SK-N-SH (cell line): ENCODE measurements at regions of chr1 and their contacts with region 1.

Region 1: DNA sequence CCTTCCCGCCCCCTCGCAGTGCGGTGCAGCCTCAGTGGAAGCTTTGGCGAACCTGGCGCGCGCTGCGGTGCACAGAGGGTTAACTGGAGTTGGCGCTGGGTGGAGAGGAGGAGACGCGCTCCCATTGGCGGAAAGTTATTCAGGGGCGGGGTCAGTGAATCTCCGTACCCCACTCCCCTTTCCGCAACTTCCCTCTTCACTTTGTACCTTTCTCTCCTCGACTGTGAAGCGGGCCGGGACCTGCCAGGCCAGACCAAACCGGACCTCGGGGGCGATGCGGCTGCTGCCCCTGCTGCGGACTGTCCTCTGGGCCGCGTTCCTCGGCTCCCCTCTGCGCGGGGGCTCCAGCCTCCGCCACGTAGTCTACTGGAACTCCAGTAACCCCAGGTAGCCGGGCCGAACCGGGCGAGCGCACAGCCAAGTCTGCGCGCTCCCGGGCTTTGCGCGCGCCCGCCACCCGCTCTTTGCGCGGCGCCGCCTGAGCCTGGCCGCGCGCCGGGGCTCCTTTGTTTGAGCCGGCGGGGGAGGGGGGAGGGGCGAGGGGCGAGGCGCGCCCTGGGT is at the start of gene EFNA4:
- DNase-seq: peak; percentile 95
- H3K4me3 ChIP-seq: peak within 1 kb of the TSS; percentile 79 to 92
- H3K27ac ChIP-seq: peak within 1 kb of the TSS; percentile 83 to 85
- H3K4me1 ChIP-seq: peaks cover 0 to 25% of the 10 kb centered on the region in 2 experiments; a peak in 2 of 4 replicates
- H3K27me3 ChIP-seq: no peaks in the 10 kb centered on the region
- CTCF ChIP-seq: no peak
- EP300 ChIP-seq: no peak
- RAD21 ChIP-seq: no peak
- polyA plus RNA-seq, gene EFNA4: 15.9 and 17.7 TPM in 2 replicates

Region 2: GRCh38 chr1:154819628-154820590 is 243.7 kb before region 1 on chr1:
- CTCF ChIA-PET with region 1: no interaction called
- POLR2A ChIA-PET with region 1: no interaction called
- DNase-seq: peak; percentile 57
- H3K4me3 ChIP-seq: no peak overlapping the region; a peak in 1 of 4 replicates
- H3K27ac ChIP-seq: no peak overlapping the region
- H3K4me1 ChIP-seq: peaks cover 0 to 26% of the 10 kb centered on the region in 2 experiments; a peak in 1 of 4 replicates
- H3K27me3 ChIP-seq: no peaks in the 10 kb centered on the region
- CTCF ChIP-seq: peak; percentile 47
- EP300 ChIP-seq: no peak
- RAD21 ChIP-seq: peak; percentile 35

Region 3: GRCh38 chr1:154955718-154956543 is 107.7 kb before region 1 on chr1 and contains the start of gene PBXIP1:
- CTCF ChIA-PET with region 1: interaction called, 13 read pairs
- POLR2A ChIA-PET with region 1: no interaction called
- DNase-seq: peak; percentile 94
- H3K4me3 ChIP-seq: peak within 1 kb of the TSS; percentile 74 to 79
- H3K27ac ChIP-seq: peak within 1 kb of the TSS; percentile 90 to 91
- H3K4me1 ChIP-seq: peaks cover 0 to 51% of the 10 kb centered on the region in 2 experiments; a peak in 3 of 4 replicates
- H3K27me3 ChIP-seq: no peaks in the 10 kb centered on the region
- CTCF ChIP-seq: peak; percentile 53
- EP300 ChIP-seq: no peak
- RAD21 ChIP-seq: peak; percentile 55
- polyA plus RNA-seq, gene PBXIP1: 55.9 and 64.3 TPM in 2 replicates

Region 4: DNA sequence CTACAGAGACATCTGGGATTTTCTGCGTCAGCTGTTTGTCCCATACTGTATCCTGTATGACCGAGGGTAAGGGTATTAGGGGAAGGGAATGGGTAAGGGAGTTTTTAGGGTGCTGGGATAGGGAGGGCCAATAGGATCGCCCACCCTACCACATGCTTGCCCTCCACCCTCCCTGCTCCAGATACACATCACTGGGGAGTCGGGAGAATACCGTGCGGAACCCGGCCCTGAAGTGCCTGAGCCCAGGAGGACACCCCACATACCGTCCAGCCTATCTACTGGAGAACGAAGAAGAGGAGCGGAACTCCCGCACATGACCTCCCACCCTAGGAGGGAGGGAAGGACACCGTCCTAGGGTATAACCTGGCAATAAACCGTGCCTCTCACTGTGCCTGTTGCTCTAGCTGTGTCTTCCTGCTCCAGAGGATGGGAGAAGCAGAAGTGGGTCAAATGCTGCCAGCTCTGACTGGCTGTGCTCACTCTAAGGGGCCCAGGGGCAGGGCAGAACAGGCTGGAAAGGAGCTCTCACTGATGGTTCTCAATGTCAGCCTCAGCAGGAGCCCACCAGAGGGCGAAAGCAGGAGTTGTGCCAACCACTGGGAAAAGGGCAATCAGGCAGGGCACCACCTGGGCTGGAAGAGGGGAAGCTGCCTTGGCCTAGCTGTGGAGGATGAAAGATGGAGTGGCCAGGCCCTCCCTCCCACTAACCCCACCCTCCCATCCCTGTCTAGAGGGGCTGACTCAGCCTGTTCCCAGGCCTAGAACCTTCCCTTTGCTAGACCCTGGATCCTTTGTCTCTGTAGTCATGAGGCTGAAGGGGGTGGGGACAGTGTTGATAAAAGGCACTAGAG is 70.7 kb before region 1 on chr1:
- CTCF ChIA-PET with region 1: interaction called, 11 read pairs
- POLR2A ChIA-PET with region 1: no interaction called
- DNase-seq: no peak
- H3K4me3 ChIP-seq: no peak overlapping the region
- H3K27ac ChIP-seq: peak overlapping the region; percentile 14 to 43; a peak in 2 of 4 replicates
- H3K4me1 ChIP-seq: peaks cover 3 to 29% of the 10 kb centered on the region in 2 experiments; a peak in 3 of 4 replicates
- H3K27me3 ChIP-seq: no peaks in the 10 kb centered on the region
- CTCF ChIP-seq: peak; percentile 30
- EP300 ChIP-seq: no peak
- RAD21 ChIP-seq: peak; percentile 31

Region 5: GRCh38 chr1:155022927-155023236 is 40.7 kb before region 1 on chr1:
- CTCF ChIA-PET with region 1: interaction called, 17 read pairs
- POLR2A ChIA-PET with region 1: no interaction called
- DNase-seq: peak; percentile 57
- H3K4me3 ChIP-seq: no peak overlapping the region
- H3K27ac ChIP-seq: no peak overlapping the region
- H3K4me1 ChIP-seq: peaks cover 0 to 4% of the 10 kb centered on the region in 2 experiments; a peak in 1 of 4 replicates
- H3K27me3 ChIP-seq: no peaks in the 10 kb centered on the region
- CTCF ChIP-seq: no peak
- EP300 ChIP-seq: no peak
- RAD21 ChIP-seq: no peak

Region 6: DNA sequence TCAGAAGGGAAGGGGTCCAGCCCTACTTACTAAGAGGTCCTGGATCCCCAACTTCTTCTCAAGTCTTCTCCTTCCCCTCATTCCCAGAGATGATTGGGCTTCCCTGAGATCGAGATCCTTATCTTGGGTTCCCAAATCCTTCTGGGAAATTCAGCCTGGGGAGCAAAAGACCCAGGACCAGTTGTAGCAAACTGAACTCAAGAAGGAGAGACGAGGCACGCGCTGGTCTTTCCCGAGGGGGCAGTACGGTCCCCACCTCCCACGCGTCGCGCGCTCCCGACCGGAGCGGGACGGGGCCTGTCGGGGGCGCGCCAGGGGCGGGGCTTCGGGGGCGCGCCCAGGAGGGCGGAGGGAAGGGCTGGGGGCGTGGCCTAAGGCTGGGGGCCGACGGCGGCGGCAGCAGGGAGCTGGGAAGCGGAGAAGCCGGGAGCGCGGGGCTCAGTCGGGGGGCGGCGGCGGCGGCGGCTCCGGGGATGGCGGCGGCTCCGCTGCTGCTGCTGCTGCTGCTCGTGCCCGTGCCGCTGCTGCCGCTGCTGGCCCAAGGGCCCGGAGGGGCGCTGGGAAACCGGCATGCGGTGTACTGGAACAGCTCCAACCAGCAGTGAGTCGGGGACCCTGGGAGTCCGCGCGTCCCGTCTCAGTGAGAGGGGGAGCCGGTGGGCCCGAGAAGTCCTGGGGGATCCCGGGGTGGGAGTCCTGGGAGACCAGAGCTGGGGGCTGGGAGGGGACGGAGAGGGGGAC is 15.0 kb after region 1 on chr1 and contains the start of gene EFNA3:
- CTCF ChIA-PET with region 1: interaction called, 116 read pairs
- POLR2A ChIA-PET with region 1: interaction called, 5 read pairs
- DNase-seq: peak; percentile 98
- H3K4me3 ChIP-seq: peak within 1 kb of the TSS; percentile 55 to 62
- H3K27ac ChIP-seq: no peak within 1 kb of the TSS; a peak in 1 of 4 replicates
- H3K4me1 ChIP-seq: peaks cover 15 to 16% of the 10 kb centered on the region in 2 experiments; a peak in 2 of 4 replicates
- H3K27me3 ChIP-seq: peaks cover 23% of the 10 kb centered on the region
- CTCF ChIP-seq: no peak
- EP300 ChIP-seq: no peak
- RAD21 ChIP-seq: no peak
- polyA plus RNA-seq, gene EFNA3: 5.5 and 6.0 TPM in 2 replicates

Region 7: GRCh38 chr1:155218854-155219591 is 155.4 kb after region 1 on chr1:
- CTCF ChIA-PET with region 1: no interaction called
- POLR2A ChIA-PET with region 1: no interaction called
- DNase-seq: peak; percentile 77
- H3K4me3 ChIP-seq: peak overlapping the region in 1 of 2 experiments; percentile 33; a peak in 2 of 4 replicates
- H3K27ac ChIP-seq: peak overlapping the region in 1 of 2 experiments; percentile 71; a peak in 2 of 4 replicates
- H3K4me1 ChIP-seq: peaks cover 0 to 14% of the 10 kb centered on the region in 2 experiments; a peak in 2 of 4 replicates
- H3K27me3 ChIP-seq: no peaks in the 10 kb centered on the region
- CTCF ChIP-seq: no peak
- EP300 ChIP-seq: no peak
- RAD21 ChIP-seq: no peak; the same call in 1 of the 2 replicates